ENCODE measurements at regions of chr10 and their contacts with region 1.

Region 1: GRCh38 chr10:121157998-121158397 is 306.8 kb downstream of the WDR11 start:
- DNase-seq: peak; percentile 54
- H3K4me3 ChIP-seq: no peak overlapping the region
- H3K27ac ChIP-seq: peak overlapping the region; percentile 100
- H3K4me1 ChIP-seq: peaks cover 49% of the 10 kb centered on the region
- H3K27me3 ChIP-seq: no peaks in the 10 kb centered on the region
- CTCF ChIP-seq: no peak

Region 2: DNA sequence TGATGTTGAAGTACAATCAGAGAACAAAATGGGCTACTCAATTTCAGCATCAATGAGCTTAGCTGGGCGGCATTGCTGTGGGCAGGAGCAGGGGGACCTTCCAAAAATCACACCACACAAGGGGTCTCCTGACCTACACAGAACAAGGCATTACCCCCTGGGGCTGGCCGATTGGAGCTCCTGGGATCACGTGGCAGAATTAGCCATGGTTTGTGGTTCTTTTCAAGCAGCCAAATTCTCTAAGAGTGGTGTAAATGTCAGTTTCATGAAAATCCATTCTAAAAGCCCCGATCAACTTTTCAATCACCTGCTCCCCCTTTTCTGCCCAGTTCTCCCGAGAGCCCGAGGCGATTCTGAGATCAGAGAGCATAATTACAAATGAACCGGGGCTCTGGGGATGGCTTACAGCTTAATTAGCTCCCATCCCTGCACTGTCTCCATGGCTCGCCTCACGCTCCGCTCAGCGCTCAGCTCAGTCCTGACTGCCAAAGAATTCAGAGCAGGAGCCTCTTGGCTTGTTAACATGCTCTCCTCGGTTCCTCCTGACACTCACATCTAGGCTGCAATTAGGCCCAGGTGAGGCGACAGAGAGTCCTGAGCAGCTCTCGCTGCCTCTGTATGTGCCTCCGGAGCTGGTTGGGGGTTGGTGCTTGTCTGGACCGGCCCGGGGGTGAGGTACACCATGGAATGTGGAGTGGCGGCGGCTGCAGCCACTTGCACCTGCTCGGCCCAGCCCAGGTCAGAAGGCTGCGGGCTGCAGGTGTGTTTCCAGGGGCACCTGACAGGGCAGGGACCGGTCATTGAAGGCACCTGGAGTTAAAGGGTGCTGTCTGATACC is 195.0 kb before region 1 on chr10:
- CTCF ChIA-PET with region 1: no interaction called
- dilution Hi-C with region 1: no loop called
- in situ Hi-C with region 1: no loop called
- intact Hi-C with region 1: loop called (anchors 5 kb)
- DNase-seq: no peak
- H3K4me3 ChIP-seq: no peak overlapping the region
- H3K27ac ChIP-seq: no peak overlapping the region
- H3K4me1 ChIP-seq: peaks cover 14% of the 10 kb centered on the region
- H3K27me3 ChIP-seq: peaks cover 2% of the 10 kb centered on the region
- CTCF ChIP-seq: no peak

Region 3: DNA sequence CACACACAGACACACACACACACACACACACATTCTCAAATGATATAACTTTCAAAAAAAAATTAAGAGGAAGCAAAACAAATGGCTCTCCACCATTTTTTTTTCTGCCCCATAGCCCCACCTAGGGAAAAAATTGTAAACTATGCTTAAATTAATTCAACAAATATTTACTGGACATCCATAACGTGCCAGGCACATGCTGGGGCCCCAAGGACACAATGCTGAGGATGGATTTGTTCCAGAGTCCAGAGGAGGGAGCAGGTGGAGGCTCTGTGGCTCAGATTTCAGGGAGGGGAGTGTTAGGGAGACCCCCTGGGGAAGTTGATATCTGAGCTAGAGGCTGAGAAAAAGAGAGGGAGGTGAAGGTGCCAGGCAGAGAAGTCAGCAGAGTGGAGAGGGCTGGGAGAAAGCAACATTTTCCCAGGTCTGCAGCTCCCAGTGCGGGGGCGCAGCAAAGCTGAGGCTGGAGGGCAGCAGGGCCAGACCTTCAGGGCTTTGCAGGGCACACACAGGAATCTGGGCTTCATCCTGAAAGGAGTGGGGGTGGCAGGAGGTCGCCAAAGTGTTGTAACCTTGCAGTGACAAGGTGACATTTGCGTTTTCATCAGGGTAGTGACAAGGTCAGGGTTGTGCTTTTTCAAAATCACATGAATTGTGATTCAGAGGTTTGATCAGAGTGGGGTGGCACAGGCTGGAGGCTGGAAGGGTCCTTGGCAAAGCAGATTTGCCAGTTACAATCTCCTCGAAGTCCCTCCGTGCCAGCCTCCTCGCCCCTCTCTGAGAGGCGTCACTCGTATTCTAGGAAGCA is 45.2 kb before region 1 on chr10:
- CTCF ChIA-PET with region 1: no interaction called
- dilution Hi-C with region 1: no loop called
- in situ Hi-C with region 1: no loop called
- intact Hi-C with region 1: loop called (anchors 1 kb)
- DNase-seq: peak; percentile 8
- H3K4me3 ChIP-seq: no peak overlapping the region
- H3K27ac ChIP-seq: peak overlapping the region; percentile 38
- H3K4me1 ChIP-seq: peaks cover 21% of the 10 kb centered on the region
- H3K27me3 ChIP-seq: no peaks in the 10 kb centered on the region
- CTCF ChIP-seq: no peak

Region 4: DNA sequence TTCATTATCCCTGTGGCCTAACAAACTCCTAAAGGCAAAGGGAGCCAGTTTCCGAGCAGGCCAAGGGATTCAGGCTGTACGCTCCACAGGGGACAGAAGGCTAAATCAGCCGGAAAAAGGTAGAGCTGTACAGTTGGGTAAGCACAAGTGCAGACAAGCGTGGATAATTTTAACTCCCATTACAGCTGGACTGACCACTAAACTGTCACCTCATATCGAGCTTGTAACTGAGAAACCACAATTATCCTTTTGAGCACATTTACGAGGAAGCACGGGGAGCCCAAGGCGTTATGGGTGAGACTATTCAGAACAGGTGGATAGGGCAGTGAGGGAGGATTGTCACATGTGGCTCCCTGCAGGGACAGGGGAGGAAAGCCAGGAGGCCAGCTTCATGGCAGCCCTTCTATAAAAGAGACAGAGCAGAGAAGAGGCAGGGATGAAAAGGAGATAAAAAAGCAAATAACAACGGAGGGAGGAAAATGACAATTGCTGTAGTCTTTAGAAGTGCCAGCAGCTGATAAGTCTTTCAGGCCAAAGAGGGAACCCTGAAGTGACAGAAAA is 152.2 kb after region 1 on chr10:
- CTCF ChIA-PET with region 1: no interaction called
- dilution Hi-C with region 1: no loop called
- in situ Hi-C with region 1: no loop called
- intact Hi-C with region 1: loop called (anchors 5 kb)
- DNase-seq: peak; percentile 65
- H3K4me3 ChIP-seq: no peak overlapping the region
- H3K27ac ChIP-seq: peak overlapping the region; percentile 81
- H3K4me1 ChIP-seq: peaks cover 64% of the 10 kb centered on the region
- H3K27me3 ChIP-seq: no peaks in the 10 kb centered on the region
- CTCF ChIP-seq: no peak

Measured in mammary epithelial cell (primary cell).